ENCODE measurements at regions of chr6 and their contacts with region 1.

Region 1: GRCh38 chr6:54737247-54737646 is 109.3 kb upstream of the FAM83B start:
- DNase-seq: no peak
- H3K4me3 Mint-ChIP-seq: no peak overlapping the region
- H3K27ac Mint-ChIP-seq: no peak overlapping the region
- H3K4me1 Mint-ChIP-seq: no peaks in the 10 kb centered on the region
- H3K27me3 Mint-ChIP-seq: no peaks in the 10 kb centered on the region

Region 2: DNA sequence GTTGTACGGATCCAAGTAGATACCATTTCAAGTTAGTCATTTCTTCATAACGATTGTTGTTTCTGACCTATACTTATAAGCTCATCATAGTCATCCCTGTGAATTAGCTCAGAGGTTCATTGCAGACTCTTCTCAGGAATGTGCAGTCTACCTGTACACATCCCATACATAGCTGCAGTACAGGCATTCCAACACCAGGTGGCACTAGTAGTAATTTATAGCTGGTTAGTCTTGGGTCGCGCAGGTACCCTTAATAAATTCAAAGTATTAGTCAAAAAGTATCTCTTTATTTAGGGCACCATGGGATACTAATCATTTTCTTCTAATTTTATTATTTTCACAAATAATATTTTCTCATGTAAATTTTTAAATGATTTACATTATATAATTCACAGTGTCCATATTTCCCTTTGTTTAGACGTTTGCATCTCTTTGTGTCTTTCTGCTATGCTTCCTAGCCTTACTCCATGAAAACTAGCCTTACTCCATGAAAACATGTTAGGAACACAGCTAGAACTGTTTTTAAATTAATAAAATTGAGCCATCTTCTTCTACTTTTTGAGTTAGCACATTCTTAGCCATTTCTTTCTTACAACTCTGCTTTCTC is 19.3 kb before region 1 on chr6:
- CTCF ChIA-PET with region 1: interaction called, 11 read pairs
- POLR2A ChIA-PET with region 1: no interaction called
- DNase-seq: peak; percentile 44
- H3K4me3 Mint-ChIP-seq: no peak overlapping the region
- H3K27ac Mint-ChIP-seq: no peak overlapping the region
- H3K4me1 Mint-ChIP-seq: no peaks in the 10 kb centered on the region
- H3K27me3 Mint-ChIP-seq: no peaks in the 10 kb centered on the region